Calu3 (cell line): ENCODE measurements at regions of chr7 and their contacts with region 1.

Region 1: DNA sequence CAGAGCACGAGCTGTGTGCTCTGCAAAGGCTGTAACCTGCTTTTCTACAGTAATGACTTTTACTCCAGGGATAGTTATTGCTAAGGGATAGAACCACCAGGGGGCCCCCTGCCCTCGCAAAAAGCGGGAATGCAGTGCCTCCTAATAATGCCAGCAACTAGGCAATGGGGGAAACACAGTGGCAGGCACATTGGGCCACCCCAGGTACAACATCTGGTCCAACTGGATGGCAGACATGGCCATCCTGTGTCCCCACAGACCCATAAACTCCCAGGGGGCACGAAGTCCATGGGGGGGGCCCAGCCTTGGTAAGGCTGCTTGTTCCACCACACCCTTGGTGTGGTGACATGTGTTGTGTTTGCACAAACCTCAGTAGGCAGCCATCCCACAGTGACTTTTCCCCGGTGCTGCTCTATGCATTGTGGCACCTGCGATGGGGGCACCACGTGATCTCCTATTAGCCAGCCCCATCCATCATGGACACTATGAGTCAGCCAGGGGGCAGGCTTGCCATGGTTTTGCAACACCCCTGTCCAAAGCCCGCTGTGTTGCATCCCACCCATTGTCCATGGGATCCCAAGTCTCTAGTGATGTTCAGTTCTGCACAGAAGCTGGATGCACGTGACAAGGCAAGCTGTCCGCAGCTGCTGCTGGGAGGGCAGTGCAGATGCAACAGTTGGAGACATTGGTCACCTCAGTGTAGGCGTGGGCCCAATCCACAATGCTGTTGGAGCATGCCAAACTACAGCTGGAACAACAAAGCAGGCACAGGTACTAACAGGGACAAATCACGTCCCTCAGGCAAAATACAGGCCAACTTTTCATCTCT is 84.0 kb downstream of the ANLN start:
- DNase-seq: peak; percentile 89
- H3K4me3 Mint-ChIP-seq: no peak overlapping the region
- H3K27ac Mint-ChIP-seq: peak overlapping the region; percentile 68
- H3K4me1 Mint-ChIP-seq: peaks cover 49% of the 10 kb centered on the region
- H3K27me3 Mint-ChIP-seq: no peaks in the 10 kb centered on the region
- CTCF ChIP-seq: peak; percentile 88

Region 2: DNA sequence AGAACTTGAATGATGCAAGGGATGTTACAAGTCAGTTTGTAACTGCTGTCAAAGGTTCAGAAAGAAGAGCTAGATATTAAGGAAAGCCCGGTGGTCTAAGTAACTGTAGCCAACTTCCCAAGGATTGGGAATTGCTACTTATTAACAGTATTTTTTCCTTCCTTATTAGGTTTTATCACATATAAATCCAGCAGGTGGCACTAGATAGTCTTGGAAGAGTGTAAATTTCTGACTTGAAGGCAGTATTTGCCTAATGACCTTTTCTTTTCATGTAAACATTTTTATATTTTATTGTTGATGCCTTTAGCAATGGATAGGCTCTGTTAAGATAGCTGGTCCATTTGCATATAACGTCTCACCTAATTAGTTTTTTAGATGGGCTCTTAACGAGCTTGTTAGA is 32.8 kb before region 1 on chr7:
- CTCF ChIA-PET with region 1: interaction called, 4 read pairs
- intact Hi-C with region 1: loop called (anchors 2 kb)
- DNase-seq: no peak
- H3K4me3 Mint-ChIP-seq: no peak overlapping the region
- H3K27ac Mint-ChIP-seq: no peak overlapping the region
- H3K4me1 Mint-ChIP-seq: no peaks in the 10 kb centered on the region
- H3K27me3 Mint-ChIP-seq: no peaks in the 10 kb centered on the region
- CTCF ChIP-seq: no peak

Region 3: GRCh38 chr7:36670585-36671431 is 197.1 kb after region 1 on chr7:
- CTCF ChIA-PET with region 1: interaction called, 4 read pairs
- intact Hi-C with region 1: loop called (anchors 1 kb)
- DNase-seq: peak; percentile 83
- H3K4me3 Mint-ChIP-seq: no peak overlapping the region
- H3K27ac Mint-ChIP-seq: no peak overlapping the region
- H3K4me1 Mint-ChIP-seq: peaks cover 26% of the 10 kb centered on the region
- H3K27me3 Mint-ChIP-seq: no peaks in the 10 kb centered on the region
- CTCF ChIP-seq: peak; percentile 94

Region 4: GRCh38 chr7:36967387-36967786 is 493.7 kb after region 1 on chr7:
- CTCF ChIA-PET with region 1: no interaction called
- intact Hi-C with region 1: loop called (anchors 5 kb)
- DNase-seq: peak; percentile 75
- H3K4me3 Mint-ChIP-seq: no peak overlapping the region
- H3K27ac Mint-ChIP-seq: no peak overlapping the region
- H3K4me1 Mint-ChIP-seq: peaks cover 51% of the 10 kb centered on the region
- H3K27me3 Mint-ChIP-seq: no peaks in the 10 kb centered on the region
- CTCF ChIP-seq: peak; percentile 87

Region 5: GRCh38 chr7:37031571-37032257 is 558.0 kb after region 1 on chr7:
- CTCF ChIA-PET with region 1: no interaction called
- intact Hi-C with region 1: loop called (anchors 5 kb)
- DNase-seq: peak; percentile 91
- H3K4me3 Mint-ChIP-seq: peak overlapping the region; percentile 14
- H3K27ac Mint-ChIP-seq: peak overlapping the region; percentile 89
- H3K4me1 Mint-ChIP-seq: peaks cover 39% of the 10 kb centered on the region
- H3K27me3 Mint-ChIP-seq: no peaks in the 10 kb centered on the region
- CTCF ChIP-seq: no peak

Region 6: DNA sequence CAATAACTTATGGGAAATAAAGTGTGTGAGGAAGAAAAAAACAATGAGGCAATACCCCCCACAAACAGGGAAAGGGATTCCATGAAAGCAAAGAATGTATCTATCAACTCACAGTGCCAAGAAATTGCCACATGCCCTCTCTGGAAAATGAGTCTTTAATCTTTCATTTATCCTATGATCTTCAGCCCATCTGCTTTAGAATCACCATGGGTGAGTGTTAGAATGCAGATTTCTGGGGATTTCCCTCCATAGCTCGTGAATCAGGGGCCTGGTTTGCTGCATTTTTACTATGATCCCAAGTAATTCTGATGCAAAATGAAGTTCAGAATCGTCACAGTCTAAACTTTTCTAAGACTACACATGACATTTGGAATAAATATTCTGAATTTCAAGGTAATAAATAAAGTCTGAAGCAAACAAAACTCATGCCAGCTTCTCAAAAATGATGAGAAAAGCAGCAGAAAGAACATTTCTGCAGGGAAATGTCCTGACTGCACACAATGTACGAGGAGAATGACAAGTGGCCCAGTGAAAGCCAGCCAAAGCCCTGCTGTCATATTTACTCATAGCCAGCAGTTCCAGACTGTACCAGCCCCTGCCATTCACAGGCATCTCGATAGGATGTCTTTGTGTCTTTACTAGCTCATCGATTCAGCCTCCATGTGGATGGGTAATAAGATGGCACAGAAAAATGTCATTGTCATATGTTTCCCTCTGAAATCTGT is 807.9 kb after region 1 on chr7:
- CTCF ChIA-PET with region 1: no interaction called
- intact Hi-C with region 1: no loop called
- DNase-seq: no peak
- H3K4me3 Mint-ChIP-seq: no peak overlapping the region
- H3K27ac Mint-ChIP-seq: no peak overlapping the region
- H3K4me1 Mint-ChIP-seq: no peaks in the 10 kb centered on the region
- H3K27me3 Mint-ChIP-seq: peaks cover 23% of the 10 kb centered on the region
- CTCF ChIP-seq: no peak